Activated T-helper 1 cell treated with anti-CD3 and anti-CD28 coated beads, Interleukin-12 subunit alpha, Interleukin-12 subunit beta, Interleukin-2, Interleukin-4 antibody, amounts not matched to agents 30 ng/mL and 10 ng/mL and 1 ng/mL, durations not matched to agents 14 hours and 24 hours and 36 hours (primary cell): ENCODE measurements at regions of chr7 and their contacts with region 1.

Region 1: GRCh38 chr7:111012799-111013675 is 77.9 kb upstream of the LRRN3 start:
- DNase-seq: peak; percentile 53
- H3K4me3 Mint-ChIP-seq: peak overlapping the region; percentile 80
- H3K27ac Mint-ChIP-seq: peak overlapping the region; percentile 86
- H3K4me1 Mint-ChIP-seq: peaks cover 72% of the 10 kb centered on the region
- H3K27me3 Mint-ChIP-seq: no peaks in the 10 kb centered on the region

Region 2: DNA sequence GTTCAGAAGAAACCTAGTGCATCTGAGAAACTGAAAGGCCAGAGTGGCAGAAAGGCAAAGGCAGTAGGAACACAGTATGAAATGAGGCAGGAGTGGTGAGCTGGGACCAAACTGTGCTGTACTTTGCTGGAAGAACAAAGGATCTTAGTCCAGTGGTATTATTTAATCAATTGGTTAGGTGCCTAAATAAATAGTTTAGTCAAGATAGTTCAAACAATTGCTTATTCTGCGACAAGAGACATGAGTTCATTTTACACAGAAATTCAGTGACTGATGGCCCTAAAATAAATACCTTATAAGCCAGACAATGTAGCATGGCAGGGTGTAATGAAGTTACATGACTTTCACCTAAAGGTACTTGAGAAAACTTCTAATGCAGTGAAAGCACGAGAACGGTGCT is 103.9 kb before region 1 on chr7:
- intact Hi-C with region 1: loop called (anchors 2 kb)
- DNase-seq: no peak
- H3K4me3 Mint-ChIP-seq: no peak overlapping the region
- H3K27ac Mint-ChIP-seq: no peak overlapping the region
- H3K4me1 Mint-ChIP-seq: peaks cover 31% of the 10 kb centered on the region
- H3K27me3 Mint-ChIP-seq: no peaks in the 10 kb centered on the region

Region 3: DNA sequence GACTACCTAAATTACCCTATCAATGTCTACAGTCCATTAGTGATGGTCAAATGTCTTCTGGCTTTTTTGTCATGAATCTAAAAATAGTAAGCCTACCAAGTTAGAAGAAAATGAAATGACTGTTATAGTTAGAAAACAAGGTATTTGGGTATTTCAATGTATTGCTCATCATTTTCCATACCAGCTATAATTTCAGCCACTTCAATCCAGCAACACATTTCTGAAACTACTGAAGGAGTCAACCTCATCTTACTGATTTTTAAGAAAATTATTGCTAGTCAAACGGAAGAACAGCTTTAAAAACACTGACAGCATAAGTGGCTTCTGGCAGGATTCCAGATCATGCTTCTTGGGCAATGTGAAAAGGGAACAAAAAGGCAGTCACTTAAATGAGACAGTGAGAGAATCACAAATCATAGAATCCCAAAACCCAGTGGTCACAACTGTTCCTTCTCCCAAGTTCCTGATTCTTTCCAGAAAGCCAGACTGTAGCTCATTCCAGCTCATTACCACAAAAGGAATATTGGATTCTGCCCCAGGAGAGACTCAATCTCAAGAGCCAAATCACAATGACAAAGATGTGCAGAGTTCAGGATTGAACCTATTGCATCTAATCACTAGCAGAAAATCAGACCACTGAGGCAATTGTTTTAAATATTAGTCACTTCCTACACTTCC is 16.7 kb after region 1 on chr7:
- intact Hi-C with region 1: loop called (anchors 1 kb)
- DNase-seq: no peak
- H3K4me3 Mint-ChIP-seq: peak overlapping the region; percentile 68
- H3K27ac Mint-ChIP-seq: peak overlapping the region; percentile 94
- H3K4me1 Mint-ChIP-seq: peaks cover 64% of the 10 kb centered on the region
- H3K27me3 Mint-ChIP-seq: no peaks in the 10 kb centered on the region

Region 4: DNA sequence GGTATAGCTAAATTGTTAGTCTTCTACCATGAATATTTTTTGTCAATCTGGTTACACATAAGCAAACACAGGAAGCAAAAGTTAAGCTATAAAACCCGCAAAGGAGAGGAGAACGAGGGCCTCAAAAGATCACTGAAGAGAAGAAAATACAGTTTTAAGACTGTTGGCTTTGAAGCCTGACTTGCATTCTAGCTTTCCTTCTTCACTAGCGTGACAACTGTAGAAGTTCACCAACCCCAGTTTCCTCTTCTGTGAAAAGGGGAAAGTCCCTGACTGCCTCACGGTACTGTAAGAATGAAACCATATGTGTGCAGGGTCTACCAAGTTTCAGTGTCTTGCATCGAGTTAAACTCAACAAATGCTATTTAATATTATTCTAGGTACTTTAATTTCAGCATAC is 70.4 kb after region 1 on chr7:
- intact Hi-C with region 1: loop called (anchors 1 kb)
- DNase-seq: peak; percentile 74
- H3K4me3 Mint-ChIP-seq: peak overlapping the region; percentile 59
- H3K27ac Mint-ChIP-seq: peak overlapping the region; percentile 82
- H3K4me1 Mint-ChIP-seq: peaks cover 84% of the 10 kb centered on the region
- H3K27me3 Mint-ChIP-seq: no peaks in the 10 kb centered on the region

Region 5: DNA sequence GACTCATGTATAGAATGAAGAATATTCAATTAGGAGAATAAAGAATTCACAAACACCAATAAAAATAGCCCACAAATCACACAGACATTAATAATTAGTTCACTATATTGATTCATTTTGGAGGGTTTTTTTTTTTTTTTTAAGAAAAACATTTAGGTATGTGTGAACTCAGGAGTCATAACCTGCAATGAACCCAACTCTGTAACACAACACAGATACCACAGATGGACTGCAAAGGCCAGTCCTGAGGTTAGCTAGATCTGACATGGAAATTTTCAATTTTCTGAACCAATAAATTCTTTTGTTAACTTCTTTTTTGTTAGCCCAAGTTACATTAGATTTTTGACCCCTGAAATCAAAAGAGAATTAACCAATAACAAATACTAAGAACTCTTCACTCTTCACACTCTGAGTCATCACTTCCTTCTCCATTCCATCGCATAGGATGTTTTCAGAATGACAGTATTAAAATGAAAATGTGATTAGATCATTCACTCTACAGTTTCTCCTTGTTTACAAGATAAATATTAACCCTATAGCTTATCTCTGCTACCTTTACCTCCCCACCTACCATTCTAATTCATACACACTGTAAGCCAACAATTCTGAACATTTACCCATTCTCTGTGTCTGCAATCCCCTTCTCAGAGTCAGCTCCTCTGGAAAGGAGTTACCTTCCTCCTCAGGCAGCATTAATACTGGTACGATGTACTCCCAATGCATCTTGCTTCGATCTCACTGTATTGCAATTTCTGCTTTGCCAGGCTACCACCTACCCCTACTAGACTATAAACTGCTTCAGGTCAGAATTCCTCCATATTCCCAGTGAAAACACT is 219.4 kb after region 1 on chr7:
- intact Hi-C with region 1: loop called (anchors 10 kb)
- DNase-seq: no peak
- H3K4me3 Mint-ChIP-seq: no peak overlapping the region
- H3K27ac Mint-ChIP-seq: peak overlapping the region; percentile 5
- H3K4me1 Mint-ChIP-seq: peaks cover 9% of the 10 kb centered on the region
- H3K27me3 Mint-ChIP-seq: no peaks in the 10 kb centered on the region

Region 6: DNA sequence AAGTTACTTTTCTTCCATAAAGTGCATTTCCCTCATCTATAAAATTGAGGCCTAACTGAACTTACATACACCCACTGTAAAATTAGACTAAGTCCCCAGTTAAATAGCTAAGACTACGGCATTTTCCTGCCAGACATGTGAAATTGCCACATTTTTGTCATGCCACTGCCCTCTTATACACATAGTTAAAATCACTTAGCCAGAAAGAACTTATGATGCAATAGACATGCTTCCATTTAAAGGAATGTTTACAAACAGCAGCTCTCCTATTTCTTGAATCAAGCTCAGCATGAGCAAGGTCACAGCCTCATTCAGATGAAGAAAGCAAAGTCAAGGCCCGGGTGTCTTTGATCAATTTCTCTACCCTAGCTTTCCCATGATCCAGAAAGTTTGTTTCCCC is 253.6 kb after region 1 on chr7:
- intact Hi-C with region 1: no loop called
- DNase-seq: no peak
- H3K4me3 Mint-ChIP-seq: no peak overlapping the region
- H3K27ac Mint-ChIP-seq: no peak overlapping the region
- H3K4me1 Mint-ChIP-seq: no peaks in the 10 kb centered on the region
- H3K27me3 Mint-ChIP-seq: no peaks in the 10 kb centered on the region

Region 7: DNA sequence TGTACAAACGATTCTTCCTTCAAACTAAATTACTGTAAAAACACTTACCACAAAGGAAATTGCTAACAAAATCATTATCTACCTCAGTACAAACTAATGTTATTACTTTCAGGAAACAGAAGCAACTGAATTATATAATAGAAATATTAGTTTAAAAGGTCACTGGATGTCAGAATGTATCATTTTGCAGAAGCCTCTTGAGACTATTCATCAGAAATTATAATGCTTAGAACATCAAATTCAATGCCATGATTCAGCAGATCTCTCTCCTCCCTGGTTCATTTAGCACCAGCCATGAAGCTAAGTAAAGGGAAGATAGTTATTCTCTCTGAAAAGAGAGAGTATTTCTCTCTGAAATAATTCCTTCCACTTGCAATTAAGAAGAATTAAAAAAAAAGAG is 326.0 kb after region 1 on chr7:
- intact Hi-C with region 1: no loop called
- DNase-seq: no peak
- H3K4me3 Mint-ChIP-seq: no peak overlapping the region
- H3K27ac Mint-ChIP-seq: no peak overlapping the region
- H3K4me1 Mint-ChIP-seq: no peaks in the 10 kb centered on the region
- H3K27me3 Mint-ChIP-seq: no peaks in the 10 kb centered on the region

Region 8: DNA sequence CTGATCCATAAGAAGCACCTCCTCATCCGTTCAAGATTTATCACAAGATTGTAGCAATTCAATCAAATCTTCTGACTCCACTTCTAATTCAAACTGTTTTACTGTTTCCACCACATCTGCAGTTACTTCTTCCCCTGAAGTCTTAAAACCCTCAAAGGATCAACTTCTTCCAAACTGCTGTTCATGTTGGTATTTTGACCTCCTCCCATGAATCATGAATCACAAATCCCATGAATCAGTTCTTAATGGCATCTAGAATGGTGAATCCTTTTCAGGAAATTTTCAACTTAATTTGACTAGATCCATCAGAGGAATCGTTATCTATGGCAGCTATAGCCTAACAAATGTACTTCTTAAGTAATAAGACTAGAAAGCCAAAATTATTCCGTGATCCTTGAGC is 426.9 kb after region 1 on chr7:
- intact Hi-C with region 1: no loop called
- DNase-seq: no peak
- H3K4me3 Mint-ChIP-seq: no peak overlapping the region
- H3K27ac Mint-ChIP-seq: no peak overlapping the region
- H3K4me1 Mint-ChIP-seq: no peaks in the 10 kb centered on the region
- H3K27me3 Mint-ChIP-seq: no peaks in the 10 kb centered on the region